Sigmoid colon (tissue), 7 donors: ENCODE measurements at regions of chr4 and their contacts with region 1.

Region 1: DNA sequence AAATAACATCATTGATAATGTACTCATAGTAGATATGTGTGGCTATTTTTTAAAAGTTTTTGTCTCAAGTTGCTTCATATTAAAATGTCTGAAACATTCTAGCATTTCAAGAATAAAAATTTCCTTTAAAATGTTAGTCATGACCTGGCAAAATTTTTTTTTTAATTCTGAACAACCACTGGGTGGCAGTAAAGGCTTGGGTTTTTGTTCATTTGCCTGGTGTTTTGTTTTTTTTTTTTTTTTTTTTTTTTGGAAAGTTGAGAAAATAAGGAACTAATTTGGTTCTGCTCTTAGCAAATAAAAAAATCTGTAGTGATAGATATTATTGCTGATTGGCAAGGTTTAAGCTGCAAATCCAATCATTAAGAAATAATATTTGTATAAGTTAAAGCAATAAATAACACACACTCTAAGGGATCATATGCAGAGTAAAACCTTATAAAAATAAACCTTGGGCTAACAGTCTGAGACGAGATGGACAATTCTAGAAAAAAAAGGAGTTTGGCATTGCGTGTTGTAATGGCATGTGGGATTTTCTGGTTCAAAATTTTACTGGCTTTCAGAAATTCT is 81.4 kb downstream of the CEP44 start:
- DNase-seq: no peak
- H3K4me3 ChIP-seq: no peak overlapping the region
- H3K27ac ChIP-seq: no peak overlapping the region
- H3K4me1 ChIP-seq: peaks cover 0 to 10% (median 2%) of the 10 kb centered on the region in 4 donors
- H3K27me3 ChIP-seq: no peaks in the 10 kb centered on the region
- CTCF ChIP-seq: peak in 3 of 4 experiments; percentile 24 to 43 (median 40)
- EP300 ChIP-seq: no peak
- POLR2A ChIP-seq: no peak

Region 2: DNA sequence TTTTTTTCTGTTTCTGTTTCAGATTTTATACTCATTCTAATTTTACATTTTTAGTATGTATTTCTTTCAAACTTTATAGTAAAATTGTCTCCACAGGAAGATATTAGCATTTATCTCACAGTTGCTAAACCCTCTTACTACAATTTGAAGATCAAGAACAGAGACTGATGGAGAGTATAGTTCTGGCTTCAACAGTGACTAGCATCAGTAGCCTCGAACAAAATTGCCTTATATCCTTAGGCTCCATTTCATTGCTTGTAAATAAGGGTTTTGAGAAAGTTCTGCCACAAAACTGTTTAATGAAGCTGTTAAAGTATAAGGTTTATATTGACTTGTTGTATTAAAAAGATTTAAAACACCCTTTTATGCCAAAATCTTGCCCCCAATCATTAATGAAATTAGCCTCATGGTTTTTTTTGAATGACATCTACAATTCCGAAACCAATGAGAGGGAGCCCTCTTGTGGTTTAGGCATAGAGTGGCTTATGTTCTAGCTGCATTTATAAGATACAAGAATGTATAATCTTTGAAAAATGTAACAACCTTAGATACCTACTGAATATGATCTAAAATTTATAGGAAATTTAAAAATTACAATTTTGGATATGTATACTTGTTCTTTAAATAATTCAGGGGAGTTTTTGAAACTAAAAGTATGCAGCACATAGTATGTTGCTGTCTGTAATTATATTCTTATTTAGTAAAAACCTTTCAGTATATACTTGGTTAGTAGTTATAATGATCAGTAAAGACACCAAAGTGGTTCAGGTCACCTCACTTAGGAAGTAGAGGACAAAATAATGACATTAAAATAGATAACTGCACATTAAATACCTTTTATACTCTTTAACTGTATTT is 267.0 kb after region 1 on chr4:
- intact Hi-C with region 1: loop called (anchors 2 kb)
- DNase-seq: no peak
- H3K4me3 ChIP-seq: no peak overlapping the region
- H3K27ac ChIP-seq: no peak overlapping the region
- H3K4me1 ChIP-seq: peaks cover 0 to 35% (median 14%) of the 10 kb centered on the region in 4 donors
- H3K27me3 ChIP-seq: no peaks in the 10 kb centered on the region
- CTCF ChIP-seq: peak; percentile 57 to 76 (median 66)
- EP300 ChIP-seq: no peak
- POLR2A ChIP-seq: no peak

Region 3: GRCh38 chr4:174714393-174715211 is 349.5 kb after region 1 on chr4:
- intact Hi-C with region 1: loop called (anchors 2 kb)
- DNase-seq: peak; percentile 66
- H3K4me3 ChIP-seq: no peak overlapping the region
- H3K27ac ChIP-seq: no peak overlapping the region
- H3K4me1 ChIP-seq: peaks cover 0 to 30% (median 14%) of the 10 kb centered on the region in 4 donors
- H3K27me3 ChIP-seq: no peaks in the 10 kb centered on the region
- CTCF ChIP-seq: peak in 2 of 4 experiments; percentile 32 to 66
- EP300 ChIP-seq: no peak
- POLR2A ChIP-seq: no peak

Region 4: DNA sequence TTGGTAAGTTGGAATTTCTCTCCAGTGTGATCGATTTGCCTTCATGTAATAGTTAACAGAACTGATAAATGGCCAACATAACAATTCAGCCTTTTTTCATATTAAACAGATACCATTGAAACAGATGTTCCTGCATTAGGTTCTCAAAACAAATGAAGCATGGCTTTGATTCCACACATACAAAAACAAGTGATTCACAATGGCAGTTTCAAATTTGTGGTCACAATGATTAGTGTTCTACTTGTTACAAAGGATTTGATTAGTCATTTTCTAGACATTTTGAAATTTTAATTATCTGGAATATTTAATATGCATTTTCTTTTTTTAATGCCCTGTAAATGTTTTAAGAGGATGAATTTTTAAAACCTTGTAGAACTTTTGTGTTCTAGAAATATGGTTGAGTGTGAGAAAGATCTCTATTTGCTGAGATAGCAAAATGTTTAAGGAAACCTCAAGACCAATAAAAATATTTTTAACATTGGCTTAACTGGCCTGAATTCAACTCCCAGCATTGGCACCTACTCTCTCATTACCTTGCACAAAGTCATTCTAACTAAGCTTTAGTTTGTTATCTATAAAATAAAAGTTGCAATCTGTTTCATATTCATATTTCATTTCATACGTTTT is 482.8 kb after region 1 on chr4:
- intact Hi-C with region 1: no loop called
- DNase-seq: no peak
- H3K4me3 ChIP-seq: no peak overlapping the region
- H3K27ac ChIP-seq: no peak overlapping the region
- H3K4me1 ChIP-seq: no peaks in the 10 kb centered on the region
- H3K27me3 ChIP-seq: no peaks in the 10 kb centered on the region
- CTCF ChIP-seq: no peak
- EP300 ChIP-seq: no peak
- POLR2A ChIP-seq: no peak

Region 5: GRCh38 chr4:175536852-175537453 is 1171.8 kb after region 1 on chr4:
- intact Hi-C with region 1: loop called (anchors 5 kb)
- DNase-seq: no peak
- H3K4me3 ChIP-seq: no peak overlapping the region
- H3K27ac ChIP-seq: no peak overlapping the region
- H3K4me1 ChIP-seq: no peaks in the 10 kb centered on the region
- H3K27me3 ChIP-seq: no peaks in the 10 kb centered on the region
- CTCF ChIP-seq: peak in 2 of 4 experiments; percentile 33 to 39
- EP300 ChIP-seq: no peak
- POLR2A ChIP-seq: no peak